ENCODE measurements at regions of chr9 and their contacts with region 1.

Region 1: DNA sequence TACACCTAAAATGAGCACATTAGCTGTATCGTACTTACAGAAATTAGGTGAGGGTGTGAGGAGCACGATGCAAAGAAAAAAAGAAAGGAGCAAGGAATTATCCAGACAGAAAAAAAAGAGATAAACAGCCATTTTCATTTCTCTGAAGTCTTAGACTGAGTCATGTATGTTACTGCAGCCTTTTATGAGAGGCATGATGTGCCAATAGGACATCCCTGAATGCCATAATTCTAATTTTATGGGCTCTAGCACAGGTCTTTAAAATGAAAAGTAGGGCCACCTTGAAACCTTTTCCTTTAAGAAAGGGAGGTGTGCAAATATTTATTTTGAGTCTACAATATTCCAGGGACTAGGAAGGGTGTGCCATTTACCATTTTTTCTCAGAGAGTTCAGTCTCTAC is 74.1 kb upstream of the PTPRD start:
- DNase-seq: no peak
- ATAC-seq: no peak
- H3K4me3 ChIP-seq: no peak overlapping the region
- H3K27ac ChIP-seq: no peak overlapping the region
- H3K4me1 ChIP-seq: no peaks in the 10 kb centered on the region
- H3K27me3 ChIP-seq: no peaks in the 10 kb centered on the region
- CTCF ChIP-seq: no peak

Region 2: GRCh38 chr9:10523164-10523563 is 163.8 kb before region 1 on chr9:
- intact Hi-C with region 1: no loop called
- DNase-seq: no peak
- ATAC-seq: no peak
- H3K4me3 ChIP-seq: no peak overlapping the region
- H3K27ac ChIP-seq: no peak overlapping the region
- H3K4me1 ChIP-seq: no peaks in the 10 kb centered on the region
- H3K27me3 ChIP-seq: no peaks in the 10 kb centered on the region
- CTCF ChIP-seq: no peak

Region 3: GRCh38 chr9:10633785-10634184 is 53.2 kb before region 1 on chr9:
- intact Hi-C with region 1: no loop called
- DNase-seq: no peak
- ATAC-seq: no peak
- H3K4me3 ChIP-seq: no peak overlapping the region
- H3K27ac ChIP-seq: no peak overlapping the region
- H3K4me1 ChIP-seq: no peaks in the 10 kb centered on the region
- H3K27me3 ChIP-seq: no peaks in the 10 kb centered on the region
- CTCF ChIP-seq: no peak

Region 4: DNA sequence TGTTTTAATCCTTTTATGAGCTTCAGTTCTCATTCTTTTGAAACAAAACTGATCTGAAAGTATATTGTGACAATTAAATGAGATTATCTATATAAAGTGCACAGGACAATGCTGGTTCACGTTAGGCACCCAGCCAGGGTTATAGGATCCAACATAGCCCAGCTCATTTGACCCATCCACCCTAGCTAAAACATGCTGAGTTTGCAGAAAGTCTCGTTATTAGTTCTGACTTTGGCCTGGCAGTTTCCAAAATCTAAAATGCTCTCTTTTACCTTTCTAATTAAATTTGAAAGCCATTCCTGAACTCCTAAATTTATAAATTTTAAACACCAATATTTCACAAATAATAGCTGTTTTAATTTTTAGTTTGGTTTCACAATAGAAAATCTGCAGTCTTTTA is 57.7 kb after region 1 on chr9:
- intact Hi-C with region 1: loop called in 1 of 10 experiments (anchors 10 kb)
- DNase-seq: no peak
- ATAC-seq: no peak
- H3K4me3 ChIP-seq: no peak overlapping the region
- H3K27ac ChIP-seq: no peak overlapping the region
- H3K4me1 ChIP-seq: no peaks in the 10 kb centered on the region
- H3K27me3 ChIP-seq: no peaks in the 10 kb centered on the region
- CTCF ChIP-seq: no peak

Measured in heart right ventricle (tissue), 16 donors.